ENCODE measurements at regions of chr15 and their contacts with region 1.

Region 1: DNA sequence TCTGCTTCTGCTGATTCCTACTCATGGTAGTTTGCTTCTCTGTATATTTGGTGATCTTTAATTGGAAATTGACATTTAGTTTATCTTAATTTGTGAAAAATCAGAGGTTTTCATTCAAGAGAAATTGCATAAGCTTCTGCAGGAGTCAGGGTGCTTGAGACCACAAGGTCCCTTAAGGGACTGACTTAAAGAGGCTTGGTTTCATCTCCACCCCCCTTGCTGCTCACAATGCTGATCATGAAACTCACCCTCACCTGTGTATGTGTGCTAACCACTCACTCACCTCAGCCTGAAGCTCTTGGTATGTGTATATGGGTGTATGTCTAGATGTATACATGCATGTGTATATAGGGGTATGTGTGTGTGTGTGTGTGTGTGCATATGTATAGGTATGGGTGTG is 11.4 kb downstream of the PGPEP1L start:
- DNase-seq: no peak
- H3K4me3 ChIP-seq: no peak overlapping the region
- CTCF ChIP-seq: no peak

Region 2: DNA sequence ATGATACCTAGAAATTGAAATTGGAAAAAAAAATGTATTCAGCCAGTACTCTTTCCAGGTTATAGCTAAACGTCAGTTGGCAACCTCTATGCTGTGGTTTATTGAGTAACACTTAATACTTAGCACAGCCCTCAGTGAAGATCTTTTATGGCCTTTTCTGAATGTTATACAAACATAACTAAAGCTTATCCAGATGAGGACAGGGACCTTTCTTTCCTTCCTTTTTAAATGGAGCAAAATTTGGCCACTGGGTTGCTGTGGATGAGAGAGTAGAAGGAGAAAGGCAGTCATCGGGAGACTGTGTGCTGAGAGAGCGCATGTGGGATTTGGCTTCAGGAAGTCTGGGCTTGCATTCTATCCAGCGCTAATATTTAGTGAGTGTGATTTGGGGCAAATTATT is 311.7 kb before region 1 on chr15:
- in situ Hi-C with region 1: no loop called
- DNase-seq: peak; percentile 55
- H3K4me3 ChIP-seq: no peak overlapping the region
- CTCF ChIP-seq: no peak

Region 3: GRCh38 chr15:98881526-98882520 is 114.3 kb before region 1 on chr15:
- in situ Hi-C with region 1: no loop called
- DNase-seq: no peak
- H3K4me3 ChIP-seq: no peak overlapping the region
- CTCF ChIP-seq: peak; percentile 47

Region 4: GRCh38 chr15:98946301-98947255 is 49.6 kb before region 1 on chr15:
- in situ Hi-C with region 1: loop called (anchors 5 kb)
- DNase-seq: no peak
- H3K4me3 ChIP-seq: no peak overlapping the region
- CTCF ChIP-seq: no peak

Measured in astrocyte of the cerebellum (primary cell).